ENCODE measurements at regions of chr11 and their contacts with region 1.

Region 1: GRCh38 chr11:47233989-47234668 is 14.5 kb downstream of the ACP2 start:
- DNase-seq: peak; percentile 38
- ATAC-seq: peak; percentile 55
- H3K4me3 Mint-ChIP-seq: no peak overlapping the region
- H3K27ac Mint-ChIP-seq: peak overlapping the region; percentile 74
- H3K4me1 Mint-ChIP-seq: peaks cover 24% of the 10 kb centered on the region
- H3K27me3 Mint-ChIP-seq: no peaks in the 10 kb centered on the region

Region 2: DNA sequence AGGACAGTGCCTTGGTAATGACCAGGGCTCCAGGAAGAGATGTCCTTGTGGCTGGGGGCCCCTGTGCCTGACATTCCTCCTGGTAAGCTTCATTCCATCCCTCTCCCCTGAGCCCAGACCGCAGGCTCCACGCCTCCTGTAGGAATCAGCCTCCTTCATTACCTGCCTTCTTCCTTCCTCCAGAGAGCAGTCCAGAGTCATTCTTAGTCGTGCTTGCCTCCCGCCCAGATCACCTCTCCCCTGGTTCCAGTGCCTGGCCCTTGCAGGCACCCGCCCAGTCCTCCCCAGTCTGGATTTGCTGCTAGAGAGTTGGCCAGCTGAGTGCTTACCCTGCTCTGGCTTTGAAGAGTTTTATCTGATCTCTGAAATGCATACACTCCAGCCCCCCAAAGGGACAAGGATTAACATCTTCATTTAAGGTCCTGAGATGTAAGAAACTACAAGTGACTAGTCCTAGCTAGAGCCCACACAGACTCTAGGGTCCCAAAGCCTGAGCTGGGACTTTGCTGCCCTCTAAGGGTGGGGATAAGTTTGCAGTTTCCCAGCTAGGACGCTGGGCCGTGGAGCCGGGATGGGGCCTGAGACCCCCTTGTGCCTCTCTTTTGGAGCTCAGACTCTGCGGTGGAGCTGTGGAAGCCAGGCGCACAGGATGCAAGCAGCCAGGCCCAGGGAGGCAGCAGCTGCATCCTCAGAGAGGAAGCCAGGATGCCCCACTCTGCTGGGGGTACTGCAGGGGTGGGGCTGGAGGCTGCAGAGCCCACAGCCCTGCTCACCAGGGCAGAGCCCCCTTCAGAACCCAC is 25.2 kb after region 1 on chr11:
- CTCF ChIA-PET with region 1: interaction called, 27 read pairs
- POLR2A ChIA-PET with region 1: interaction called, 5 read pairs
- DNase-seq: peak; percentile 62
- ATAC-seq: peak; percentile 78
- H3K4me3 Mint-ChIP-seq: no peak overlapping the region
- H3K27ac Mint-ChIP-seq: peak overlapping the region; percentile 62
- H3K4me1 Mint-ChIP-seq: peaks cover 35% of the 10 kb centered on the region
- H3K27me3 Mint-ChIP-seq: no peaks in the 10 kb centered on the region

Region 3: DNA sequence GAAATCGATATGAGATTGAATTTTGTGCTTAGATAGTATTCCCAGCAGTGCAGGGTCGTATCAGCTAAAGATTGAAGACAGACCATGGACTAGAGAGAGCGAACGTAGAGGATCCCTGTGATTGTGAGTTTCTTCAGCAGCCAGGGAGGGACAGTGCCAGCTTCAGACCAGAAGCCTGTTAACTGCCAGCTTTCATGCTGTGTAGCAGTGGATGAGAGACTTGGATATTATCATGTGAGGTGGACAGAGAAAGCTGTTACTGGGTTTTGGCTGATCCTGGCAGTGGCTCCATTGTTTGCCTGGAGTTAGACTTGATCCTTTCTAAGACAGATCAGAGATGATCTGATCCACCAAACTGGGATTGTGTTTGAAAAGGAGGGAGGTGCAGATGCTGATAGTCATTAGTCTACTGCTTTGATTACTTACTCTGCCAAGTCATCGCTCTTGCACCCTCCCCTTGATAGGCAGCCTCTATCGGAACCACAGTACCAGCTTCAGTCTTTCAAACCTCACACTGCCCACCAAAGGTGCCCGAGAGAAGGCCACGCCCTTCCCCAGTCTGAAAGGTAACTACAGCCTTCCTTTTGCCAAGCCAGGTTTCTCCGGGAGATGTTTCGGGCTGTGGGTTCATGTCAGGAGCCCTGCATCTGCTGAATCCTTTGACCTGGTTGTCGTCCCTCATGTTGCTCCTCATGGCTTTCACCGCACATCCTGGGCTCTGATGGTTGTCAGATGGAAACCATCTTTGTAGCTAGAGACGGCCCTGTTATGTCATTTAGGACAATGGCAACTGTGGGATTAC is 52.0 kb after region 1 on chr11:
- CTCF ChIA-PET with region 1: no interaction called
- POLR2A ChIA-PET with region 1: no interaction called
- DNase-seq: no peak
- ATAC-seq: no peak
- H3K4me3 Mint-ChIP-seq: no peak overlapping the region
- H3K27ac Mint-ChIP-seq: peak overlapping the region; percentile 28
- H3K4me1 Mint-ChIP-seq: no peaks in the 10 kb centered on the region
- H3K27me3 Mint-ChIP-seq: no peaks in the 10 kb centered on the region